Gastrocnemius medialis (tissue), 4 donors: ENCODE measurements at regions of chr10 and their contacts with region 1.

Region 1: DNA sequence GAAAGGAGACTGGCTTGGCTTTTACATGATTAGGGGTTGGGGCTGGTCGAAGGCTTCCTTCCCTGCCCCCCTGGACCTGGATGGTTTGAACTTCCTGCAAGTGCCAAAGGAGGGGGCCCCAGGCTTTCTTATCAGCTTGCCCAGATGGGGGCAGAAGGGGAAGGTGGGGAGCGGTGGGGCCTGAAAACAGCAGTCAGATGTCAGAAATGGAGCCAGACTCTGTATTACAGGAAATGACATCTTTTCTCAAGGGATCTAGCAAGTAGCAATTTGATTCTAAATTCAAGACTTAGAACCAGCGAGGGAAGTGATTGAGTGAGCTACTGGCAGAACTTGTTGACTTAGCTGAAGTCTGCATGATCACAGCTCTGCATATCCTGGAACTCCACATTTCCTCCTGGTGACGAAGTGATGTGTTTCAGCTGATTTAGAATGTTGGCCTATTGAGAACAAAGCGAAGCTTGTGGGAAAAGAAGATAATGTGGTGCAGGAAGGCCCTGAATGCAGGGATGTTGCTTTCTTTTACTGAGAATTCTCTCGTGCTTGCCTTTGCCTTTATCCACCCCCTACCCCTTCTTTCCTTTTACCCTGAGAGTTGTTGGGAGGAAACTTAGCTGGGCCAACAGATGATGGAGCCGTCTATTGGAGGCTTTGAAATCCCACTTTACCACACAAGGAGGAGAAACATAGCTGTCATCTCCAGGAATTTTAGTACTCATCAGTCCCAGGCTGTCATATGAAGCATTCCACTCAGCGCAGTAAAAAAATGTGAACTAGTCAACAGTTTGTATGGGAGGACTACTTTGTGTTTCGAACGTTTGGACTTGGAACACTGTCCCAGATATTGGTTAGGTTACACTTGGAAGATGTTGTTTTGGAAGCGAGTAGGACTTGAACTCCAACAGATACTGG is 43.2 kb downstream of the CCNY start:
- DNase-seq: peak in 1 of 2 donors; percentile 31
- ATAC-seq: peak; percentile 66
- H3K4me3 ChIP-seq: peak overlapping the region in 1 of 4 donors; percentile 6
- H3K27ac ChIP-seq: peak overlapping the region; percentile 68 to 80 (median 77)
- H3K4me1 ChIP-seq: peaks cover 63 to 70% of the 10 kb centered on the region in 2 donors
- H3K27me3 ChIP-seq: no peaks in the 10 kb centered on the region
- CTCF ChIP-seq: no peak
- POLR2A ChIP-seq: peak in 1 of 2 donors; percentile 34

Region 2: GRCh38 chr10:35451151-35452016 is 71.9 kb after region 1 on chr10:
- in situ Hi-C with region 1: no loop called
- intact Hi-C with region 1: loop called (anchors 5 kb)
- DNase-seq: no peak
- ATAC-seq: peak in 1 of 2 donors; percentile 18
- H3K4me3 ChIP-seq: no peak overlapping the region
- H3K27ac ChIP-seq: peak overlapping the region; percentile 57 to 79 (median 68)
- H3K4me1 ChIP-seq: peaks cover 89 to 93% of the 10 kb centered on the region in 2 donors
- H3K27me3 ChIP-seq: no peaks in the 10 kb centered on the region
- CTCF ChIP-seq: no peak
- POLR2A ChIP-seq: no peak